Activated T-helper 1 cell treated with anti-CD3 and anti-CD28 coated beads, Interleukin-12 subunit alpha, Interleukin-12 subunit beta, Interleukin-2, Interleukin-4 antibody, amounts not matched to agents 30 ng/mL and 10 ng/mL and 1 ng/mL, durations not matched to agents 14 hours and 24 hours and 36 hours (primary cell): ENCODE measurements at regions of chr1 and their contacts with region 1.

Region 1: GRCh38 chr1:100866041-100866900 is 28.4 kb downstream of the EXTL2 start:
- DNase-seq: no peak
- H3K4me3 Mint-ChIP-seq: no peak overlapping the region
- H3K27ac Mint-ChIP-seq: no peak overlapping the region
- H3K4me1 Mint-ChIP-seq: no peaks in the 10 kb centered on the region
- H3K27me3 Mint-ChIP-seq: no peaks in the 10 kb centered on the region

Region 2: DNA sequence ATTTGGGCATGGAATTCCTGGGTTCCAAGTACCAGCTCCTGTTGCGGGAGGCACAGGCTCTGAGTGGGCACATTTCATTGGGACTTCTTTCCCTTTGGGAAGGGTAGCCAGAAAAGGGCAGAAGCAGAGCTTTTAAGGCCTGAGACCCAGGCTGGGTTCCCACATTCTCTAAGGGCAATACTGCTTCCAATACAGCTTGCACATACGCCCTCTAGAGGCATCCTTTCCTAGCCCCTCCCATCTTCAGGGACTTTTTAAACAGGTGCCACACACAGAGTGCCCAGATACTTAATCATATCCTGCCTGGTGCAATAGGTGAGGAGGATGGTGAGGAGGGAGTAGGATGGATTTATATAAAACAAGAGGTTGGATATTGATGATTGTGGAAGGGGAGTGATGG is 322.6 kb before region 1 on chr1:
- intact Hi-C with region 1: loop called (anchors 5 kb)
- DNase-seq: no peak
- H3K4me3 Mint-ChIP-seq: no peak overlapping the region
- H3K27ac Mint-ChIP-seq: no peak overlapping the region
- H3K4me1 Mint-ChIP-seq: peaks cover 5% of the 10 kb centered on the region
- H3K27me3 Mint-ChIP-seq: peaks cover 37% of the 10 kb centered on the region

Region 3: GRCh38 chr1:100606438-100606837 is 259.8 kb before region 1 on chr1:
- intact Hi-C with region 1: loop called (anchors 1 kb)
- DNase-seq: no peak
- H3K4me3 Mint-ChIP-seq: no peak overlapping the region
- H3K27ac Mint-ChIP-seq: no peak overlapping the region
- H3K4me1 Mint-ChIP-seq: no peaks in the 10 kb centered on the region
- H3K27me3 Mint-ChIP-seq: peaks cover 5% of the 10 kb centered on the region

Region 4: GRCh38 chr1:100734676-100735075 is 131.6 kb before region 1 on chr1:
- intact Hi-C with region 1: no loop called
- DNase-seq: no peak
- H3K4me3 Mint-ChIP-seq: no peak overlapping the region
- H3K27ac Mint-ChIP-seq: no peak overlapping the region
- H3K4me1 Mint-ChIP-seq: no peaks in the 10 kb centered on the region
- H3K27me3 Mint-ChIP-seq: no peaks in the 10 kb centered on the region

Region 5: DNA sequence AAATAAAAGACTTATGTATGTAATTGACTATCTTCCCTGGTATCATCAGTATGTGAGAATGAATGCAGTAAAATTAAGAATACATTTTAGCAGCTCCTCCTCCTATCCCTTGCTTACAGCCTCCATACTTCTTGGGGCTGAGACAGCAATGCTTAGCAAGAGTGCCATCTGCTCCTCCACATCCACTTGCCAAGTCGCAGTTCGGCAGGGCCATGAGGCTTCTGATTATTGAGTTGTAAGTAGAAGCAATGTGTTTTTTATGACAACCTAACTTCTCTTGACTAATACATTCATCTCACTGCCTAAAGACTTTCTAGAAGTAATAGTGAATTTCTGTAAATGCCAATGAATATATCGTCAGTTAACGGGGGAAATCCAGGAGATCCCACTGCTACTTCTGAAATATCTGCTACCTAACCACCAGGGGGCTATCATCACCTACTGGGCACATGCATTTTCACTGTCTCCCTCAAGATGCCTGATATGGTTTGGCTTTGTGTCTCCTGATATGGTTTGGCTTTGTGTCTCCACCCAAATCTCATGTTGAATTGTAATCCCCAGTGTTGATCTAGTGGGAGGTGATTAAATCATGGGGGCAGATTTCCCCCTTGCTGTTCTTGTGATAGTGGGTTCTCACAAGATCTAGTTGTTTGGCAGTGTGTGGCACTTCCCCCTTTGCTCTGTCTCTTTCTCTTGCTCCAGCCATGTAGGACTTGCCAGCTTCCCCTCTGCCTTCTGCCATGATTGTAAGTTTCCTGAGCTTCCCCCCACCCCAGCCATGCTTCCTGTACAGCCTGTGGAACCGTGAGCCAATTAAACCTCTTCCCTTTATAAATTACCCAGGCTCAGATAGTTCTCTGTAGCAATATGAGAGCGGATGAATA is 31.3 kb before region 1 on chr1:
- intact Hi-C with region 1: loop called (anchors 1 kb)
- DNase-seq: no peak
- H3K4me3 Mint-ChIP-seq: no peak overlapping the region
- H3K27ac Mint-ChIP-seq: no peak overlapping the region
- H3K4me1 Mint-ChIP-seq: no peaks in the 10 kb centered on the region
- H3K27me3 Mint-ChIP-seq: peaks cover 5% of the 10 kb centered on the region

Region 6: DNA sequence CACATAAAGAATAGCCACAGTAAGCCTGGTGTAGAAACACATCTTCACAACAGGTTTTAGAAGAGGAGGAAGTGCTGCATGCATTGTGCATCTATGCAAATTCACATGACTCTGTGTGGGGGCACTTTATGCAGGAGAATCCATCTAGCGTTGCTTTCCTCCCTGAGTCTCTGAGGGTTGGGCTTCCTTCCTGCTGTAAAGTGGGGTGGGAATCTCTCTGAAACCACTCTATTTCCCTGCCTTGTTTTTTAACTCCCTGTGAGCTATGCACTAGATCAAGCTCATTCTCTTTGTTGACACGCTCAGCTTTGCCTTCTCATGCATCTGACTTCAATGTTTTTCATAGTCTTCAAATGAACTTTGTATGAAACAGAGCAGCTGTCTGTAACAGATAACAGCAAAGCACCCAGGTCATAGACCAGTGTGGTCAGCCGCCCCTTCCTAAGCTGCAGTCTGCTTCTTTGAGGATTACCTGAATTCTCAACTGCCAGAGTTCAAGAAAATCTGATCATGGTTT is 262.0 kb after region 1 on chr1:
- intact Hi-C with region 1: no loop called
- DNase-seq: no peak
- H3K4me3 Mint-ChIP-seq: peak overlapping the region; percentile 73
- H3K27ac Mint-ChIP-seq: peak overlapping the region; percentile 72
- H3K4me1 Mint-ChIP-seq: peaks cover 52% of the 10 kb centered on the region
- H3K27me3 Mint-ChIP-seq: peaks cover 1% of the 10 kb centered on the region